ENCODE measurements at regions of chr14 and their contacts with region 1.

Region 1: GRCh38 chr14:67285876-67286452 is 44.7 kb downstream of the PALS1 start:
- DNase-seq: no peak
- H3K4me3 ChIP-seq: no peak overlapping the region
- H3K27ac ChIP-seq: peak overlapping the region in 10 of 59 donors; percentile 2 to 55 (median 36)
- H3K27me3 ChIP-seq: no peaks in the 10 kb centered on the region
- CTCF ChIP-seq: peak; percentile 50 to 89 (median 76)

Region 2: GRCh38 chr14:66360366-66360926 is 925.5 kb before region 1 on chr14:
- intact Hi-C with region 1: loop called in 1 of 2 experiments (anchors 5 kb)
- DNase-seq: no peak
- H3K4me3 ChIP-seq: no peak overlapping the region
- H3K27ac ChIP-seq: no peak overlapping the region
- H3K27me3 ChIP-seq: no peaks in the 10 kb centered on the region
- CTCF ChIP-seq: no peak

Region 3: DNA sequence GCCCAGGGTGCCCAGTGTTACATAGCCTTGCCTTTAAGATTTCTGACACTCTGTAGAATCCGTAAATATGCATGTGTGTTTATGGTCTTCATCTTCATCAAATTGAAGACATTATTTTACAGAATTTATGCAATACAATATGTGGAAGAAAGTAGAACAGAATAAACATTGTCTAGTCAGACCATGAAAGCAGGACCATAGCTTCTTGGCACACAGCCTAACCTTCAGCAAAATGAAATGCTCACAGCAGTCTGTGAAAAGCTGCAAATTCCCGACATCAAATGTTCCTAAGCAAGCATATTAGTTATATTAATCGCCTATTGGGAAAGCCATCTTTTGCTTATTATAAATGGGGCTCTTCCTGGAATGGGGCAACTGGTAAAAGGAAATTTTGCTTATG is 208.0 kb before region 1 on chr14:
- intact Hi-C with region 1: no loop called
- DNase-seq: peak in 2 of 10 donors; percentile 15 to 30
- H3K4me3 ChIP-seq: no peak overlapping the region
- H3K27ac ChIP-seq: peak overlapping the region in 10 of 59 donors; percentile 2 to 41 (median 21)
- H3K27me3 ChIP-seq: no peaks in the 10 kb centered on the region
- CTCF ChIP-seq: no peak

Region 4: DNA sequence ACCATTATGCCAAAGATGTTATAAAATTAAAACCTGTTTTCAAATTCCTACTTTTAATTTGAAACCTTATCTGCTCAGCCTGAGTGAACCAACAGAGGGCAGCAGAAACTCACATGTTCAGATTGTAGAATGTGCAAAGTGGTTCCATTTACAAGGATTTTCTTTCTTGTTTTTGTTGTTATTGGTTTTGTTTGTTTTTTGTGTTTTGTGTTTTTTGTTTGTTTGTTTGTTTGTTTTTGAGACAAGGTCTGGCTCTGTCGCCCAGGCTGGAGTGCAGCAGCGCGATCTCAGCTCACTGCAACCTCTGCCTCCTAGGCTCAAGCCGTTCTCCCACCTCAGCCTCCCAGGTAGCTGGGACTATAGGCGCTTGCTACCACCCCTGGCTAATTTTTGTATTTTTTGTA is 119.5 kb before region 1 on chr14:
- intact Hi-C with region 1: loop called (anchors 2 to 5 kb)
- DNase-seq: peak in 2 of 10 donors; percentile 42 to 53
- H3K4me3 ChIP-seq: no peak overlapping the region
- H3K27ac ChIP-seq: peak overlapping the region in 20 of 59 donors; percentile 2 to 52 (median 39)
- H3K27me3 ChIP-seq: no peaks in the 10 kb centered on the region
- CTCF ChIP-seq: peak; percentile 58 to 97 (median 85)

Region 5: GRCh38 chr14:67359775-67360648 is 74.0 kb after region 1 on chr14 and contains the starts of genes ATP6V1D and EIF2S1:
- intact Hi-C with region 1: loop called (anchors 10 kb)
- DNase-seq: peak; percentile 98 to 100 (median 99)
- H3K4me3 ChIP-seq: peak within 1 kb of the TSS; percentile 67 to 100 (median 94)
- H3K27ac ChIP-seq: peak within 1 kb of the TSS; percentile 91 to 100 (median 99)
- H3K27me3 ChIP-seq: no peaks in the 10 kb centered on the region
- CTCF ChIP-seq: peak; percentile 91 to 100 (median 99)
- total RNA-seq, gene ATP6V1D: 54.1 to 244 (median 150) TPM
- total RNA-seq, gene EIF2S1: 31.2 to 84.1 (median 59.5) TPM

Region 6: GRCh38 chr14:67479974-67480373 is 194.0 kb after region 1 on chr14:
- intact Hi-C with region 1: no loop called
- DNase-seq: no peak
- H3K4me3 ChIP-seq: no peak overlapping the region
- H3K27ac ChIP-seq: peak overlapping the region in 1 of 59 donors; percentile 29
- H3K27me3 ChIP-seq: no peaks in the 10 kb centered on the region
- CTCF ChIP-seq: no peak